Naive thymus-derived CD4-positive, alpha-beta T cell (primary cell): ENCODE measurements at regions of chr2 and their contacts with region 1.

Region 1: DNA sequence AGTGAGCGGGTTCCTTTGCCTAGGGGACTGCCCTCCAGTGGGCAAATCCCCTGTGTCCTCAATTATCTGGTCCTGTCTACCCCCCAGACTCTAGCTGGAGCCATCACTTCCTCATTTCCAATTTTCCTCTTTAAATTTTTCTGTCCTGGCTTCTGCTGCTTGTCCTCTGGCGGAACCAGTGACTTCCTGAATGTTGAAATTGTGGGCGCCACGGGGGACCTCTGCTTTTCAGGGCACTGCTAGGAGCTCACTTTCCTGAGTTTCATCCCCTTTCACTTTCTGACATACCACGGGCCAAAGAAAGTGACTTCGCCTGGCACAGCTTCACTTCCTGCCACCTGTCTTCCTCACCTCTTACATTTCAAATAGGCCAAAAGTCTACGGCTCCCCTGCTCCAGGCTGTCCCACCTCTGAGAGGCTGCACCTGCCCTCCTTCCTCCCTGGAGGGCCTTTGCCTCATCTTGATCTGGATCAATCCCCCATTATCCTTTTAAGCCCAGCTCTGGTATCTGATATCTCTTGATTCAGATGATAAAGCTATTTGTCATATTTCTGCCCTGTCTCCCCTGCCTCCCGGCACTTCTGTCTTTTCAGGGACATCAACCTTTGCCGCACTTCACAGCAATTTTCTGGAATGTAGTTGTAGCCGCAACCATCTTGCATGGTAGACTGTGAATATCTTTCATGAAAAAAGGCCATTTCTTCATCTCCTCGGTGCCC is 1.3 kb upstream of the MARCO start:
- DNase-seq: peak in 1 of 9 donors; percentile 0
- ATAC-seq: peak; percentile 57
- H3K4me3 ChIP-seq: no peak overlapping the region
- H3K4me3 Mint-ChIP-seq: peak overlapping the region in 8 of 10 donors; percentile 29 to 62 (median 53)
- H3K27ac ChIP-seq: no peak overlapping the region
- H3K27ac Mint-ChIP-seq: peak overlapping the region in 5 of 9 donors; percentile 17 to 78 (median 59)
- H3K4me1 ChIP-seq: no peaks in the 10 kb centered on the region
- H3K4me1 Mint-ChIP-seq: peaks cover 0 to 17% (median 11%) of the 10 kb centered on the region in 7 donors
- H3K27me3 ChIP-seq: no peaks in the 10 kb centered on the region
- H3K27me3 Mint-ChIP-seq: peaks cover 0 to 8% (median 3%) of the 10 kb centered on the region in 5 donors

Region 2: DNA sequence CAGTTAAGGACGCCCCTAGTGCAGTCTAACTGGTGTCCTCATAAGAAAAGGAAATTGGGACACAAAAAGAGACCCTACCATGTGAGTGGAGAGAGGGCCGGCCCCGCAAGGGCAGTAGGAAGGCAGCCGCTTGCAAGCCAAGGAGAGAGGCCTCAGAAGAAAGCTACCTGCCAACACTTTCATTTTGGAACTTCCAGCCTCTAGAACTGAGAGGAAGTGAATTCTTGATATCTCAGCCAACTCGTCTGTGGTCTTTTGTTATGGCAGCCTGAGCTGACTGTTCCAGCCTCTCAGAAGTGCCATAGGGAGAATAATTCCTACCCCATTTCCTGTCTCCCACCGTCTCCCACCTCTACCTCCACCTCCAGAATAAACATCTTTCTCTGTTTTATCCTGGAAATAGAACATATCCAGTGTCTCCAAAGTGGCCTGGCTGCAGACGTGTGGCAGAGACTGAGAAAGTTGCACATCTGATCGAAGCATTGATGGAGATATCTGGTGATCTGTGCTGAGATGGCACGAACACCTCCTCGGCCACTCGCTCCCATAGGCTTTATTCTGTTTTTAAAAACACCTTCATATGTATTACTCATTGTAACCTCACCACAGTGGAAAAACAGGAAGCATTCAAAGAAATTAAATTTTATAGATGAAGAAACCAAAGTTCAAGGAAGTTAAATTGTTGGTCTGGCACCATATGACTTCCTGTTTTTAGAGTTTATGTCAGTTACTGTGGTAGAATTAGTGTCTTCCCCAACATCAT is 38.2 kb before region 1 on chr2:
- CTCF ChIA-PET with region 1: no interaction called
- POLR2A ChIA-PET with region 1: no interaction called
- intact Hi-C with region 1: loop called in 1 of 2 experiments (anchors 5 kb)
- DNase-seq: peak in 6 of 9 donors; percentile 5 to 24 (median 10)
- ATAC-seq: peak; percentile 78
- H3K4me3 ChIP-seq: peak overlapping the region; percentile 0
- H3K4me3 Mint-ChIP-seq: peak overlapping the region in 9 of 10 donors; percentile 57 to 73 (median 68)
- H3K27ac ChIP-seq: peak overlapping the region; percentile 0
- H3K27ac Mint-ChIP-seq: peak overlapping the region in 8 of 9 donors; percentile 59 to 95 (median 82)
- H3K4me1 ChIP-seq: peaks cover 0 to 29% of the 10 kb centered on the region in 2 donors
- H3K4me1 Mint-ChIP-seq: peaks cover 6 to 39% (median 34%) of the 10 kb centered on the region in 7 donors
- H3K27me3 ChIP-seq: no peaks in the 10 kb centered on the region
- H3K27me3 Mint-ChIP-seq: no peaks in the 10 kb centered on the region